Endothelial cell of umbilical vein (primary cell): ENCODE measurements at regions of chr3 and their contacts with region 1.

Region 1: GRCh38 chr3:168878655-168879054 is 782.9 kb upstream of the GOLIM4 start:
- DNase-seq: peak; percentile 31
- H3K4me3 ChIP-seq: no peak overlapping the region
- H3K27ac ChIP-seq: peak overlapping the region; percentile 13
- H3K4me1 ChIP-seq: peaks cover 30% of the 10 kb centered on the region
- H3K27me3 ChIP-seq: no peaks in the 10 kb centered on the region
- CTCF ChIP-seq: no peak
- POLR2A ChIP-seq: no peak

Region 2: DNA sequence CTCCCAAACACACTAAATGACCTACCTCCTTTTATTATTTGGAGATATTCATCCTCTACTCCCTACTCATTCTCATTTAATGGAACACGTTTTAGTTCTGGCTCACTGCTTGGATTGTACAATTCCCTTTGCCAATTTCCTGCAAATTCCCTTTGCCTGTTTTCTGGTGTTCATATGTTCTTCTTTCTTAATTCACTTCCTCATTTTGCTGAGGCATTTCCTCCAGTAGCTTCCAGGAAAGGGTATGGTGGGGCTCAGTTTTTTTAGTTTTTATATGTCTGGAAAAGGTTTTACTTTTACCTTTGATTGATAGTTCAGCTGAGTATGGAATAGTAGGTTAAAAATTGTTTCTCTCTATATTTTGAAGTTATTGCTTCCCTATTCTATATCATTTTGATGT is 639.4 kb before region 1 on chr3:
- CTCF ChIA-PET with region 1: no interaction called
- POLR2A ChIA-PET with region 1: no interaction called
- dilution Hi-C with region 1: no loop called
- intact Hi-C with region 1: no loop called
- DNase-seq: no peak
- H3K4me3 ChIP-seq: no peak overlapping the region
- H3K27ac ChIP-seq: no peak overlapping the region
- H3K4me1 ChIP-seq: no peaks in the 10 kb centered on the region
- H3K27me3 ChIP-seq: peaks cover 2 to 18% of the 10 kb centered on the region in 2 experiments
- CTCF ChIP-seq: no peak
- POLR2A ChIP-seq: no peak

Region 3: GRCh38 chr3:168722091-168722490 is 156.6 kb before region 1 on chr3:
- CTCF ChIA-PET with region 1: no interaction called
- POLR2A ChIA-PET with region 1: no interaction called
- dilution Hi-C with region 1: no loop called
- intact Hi-C with region 1: no loop called
- DNase-seq: no peak
- H3K4me3 ChIP-seq: no peak overlapping the region
- H3K27ac ChIP-seq: no peak overlapping the region
- H3K4me1 ChIP-seq: no peaks in the 10 kb centered on the region
- H3K27me3 ChIP-seq: peaks cover 0 to under 1% of the 10 kb centered on the region in 2 experiments
- CTCF ChIP-seq: no peak
- POLR2A ChIP-seq: no peak

Region 4: DNA sequence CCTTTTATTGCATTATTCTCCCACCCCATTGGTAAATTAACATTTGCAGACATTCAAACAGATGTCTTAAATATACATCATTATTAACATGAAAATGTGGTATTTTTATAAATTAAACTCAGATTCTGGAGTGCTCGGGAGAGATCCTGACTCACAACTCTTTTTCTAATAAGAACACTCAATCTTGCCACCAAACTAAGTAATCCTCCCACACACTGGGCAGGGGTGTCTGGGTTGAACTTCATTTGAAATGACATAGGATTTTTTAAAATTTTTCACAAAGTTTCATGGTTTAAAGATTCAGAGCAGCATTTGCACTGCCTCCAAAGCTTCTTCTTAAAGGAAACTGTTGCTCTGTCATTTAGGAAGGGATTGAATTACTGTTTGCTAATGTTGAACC is 30.6 kb after region 1 on chr3:
- CTCF ChIA-PET with region 1: no interaction called
- POLR2A ChIA-PET with region 1: no interaction called
- dilution Hi-C with region 1: no loop called
- intact Hi-C with region 1: loop called (anchors 1 kb)
- DNase-seq: no peak
- H3K4me3 ChIP-seq: no peak overlapping the region
- H3K27ac ChIP-seq: no peak overlapping the region
- H3K4me1 ChIP-seq: no peaks in the 10 kb centered on the region
- H3K27me3 ChIP-seq: no peaks in the 10 kb centered on the region
- CTCF ChIP-seq: no peak
- POLR2A ChIP-seq: no peak

Region 5: GRCh38 chr3:169112153-169112892 is 233.7 kb after region 1 on chr3:
- CTCF ChIA-PET with region 1: no interaction called
- POLR2A ChIA-PET with region 1: no interaction called
- dilution Hi-C with region 1: no loop called
- intact Hi-C with region 1: loop called (anchors 2 kb)
- DNase-seq: peak; percentile 86
- H3K4me3 ChIP-seq: peak overlapping the region in 1 of 3 experiments; percentile 14
- H3K27ac ChIP-seq: peak overlapping the region; percentile 96
- H3K4me1 ChIP-seq: peaks cover 63% of the 10 kb centered on the region
- H3K27me3 ChIP-seq: no peaks in the 10 kb centered on the region
- CTCF ChIP-seq: no peak
- POLR2A ChIP-seq: peak; percentile 71